MCF 10A (cell line): ENCODE measurements at regions of chr7 and their contacts with region 1.

Region 1: GRCh38 chr7:156473476-156474240 is 166.9 kb upstream of the RNF32 start:
- DNase-seq: peak; percentile 57
- H3K4me3 Mint-ChIP-seq: no peak overlapping the region
- H3K27ac Mint-ChIP-seq: peak overlapping the region; percentile 59
- H3K4me1 Mint-ChIP-seq: peaks cover 20% of the 10 kb centered on the region
- H3K27me3 Mint-ChIP-seq: no peaks in the 10 kb centered on the region
- CTCF ChIP-seq: peak; percentile 58

Region 2: GRCh38 chr7:155815332-155816191 is 658.1 kb before region 1 on chr7:
- CTCF ChIA-PET with region 1: interaction called, 16 read pairs
- POLR2A ChIA-PET with region 1: no interaction called
- intact Hi-C with region 1: no loop called
- DNase-seq: peak; percentile 74
- H3K4me3 Mint-ChIP-seq: no peak overlapping the region
- H3K27ac Mint-ChIP-seq: no peak overlapping the region
- H3K4me1 Mint-ChIP-seq: peaks cover 11% of the 10 kb centered on the region
- H3K27me3 Mint-ChIP-seq: peaks cover 30% of the 10 kb centered on the region
- CTCF ChIP-seq: peak; percentile 91

Region 3: GRCh38 chr7:156156734-156157610 is 316.7 kb before region 1 on chr7:
- CTCF ChIA-PET with region 1: interaction called, 3 read pairs
- POLR2A ChIA-PET with region 1: no interaction called
- intact Hi-C with region 1: loop called (anchors 1 kb)
- DNase-seq: peak; percentile 65
- H3K4me3 Mint-ChIP-seq: no peak overlapping the region
- H3K27ac Mint-ChIP-seq: no peak overlapping the region
- H3K4me1 Mint-ChIP-seq: peaks cover 11% of the 10 kb centered on the region
- H3K27me3 Mint-ChIP-seq: no peaks in the 10 kb centered on the region
- CTCF ChIP-seq: peak; percentile 50

Region 4: GRCh38 chr7:156334636-156335035 is 139.0 kb before region 1 on chr7:
- CTCF ChIA-PET with region 1: interaction called, 3 read pairs
- POLR2A ChIA-PET with region 1: no interaction called
- intact Hi-C with region 1: loop called (anchors 10 kb)
- DNase-seq: peak; percentile 72
- H3K4me3 Mint-ChIP-seq: no peak overlapping the region
- H3K27ac Mint-ChIP-seq: no peak overlapping the region
- H3K4me1 Mint-ChIP-seq: no peaks in the 10 kb centered on the region
- H3K27me3 Mint-ChIP-seq: peaks cover 10% of the 10 kb centered on the region
- CTCF ChIP-seq: no peak

Region 5: GRCh38 chr7:156640257-156640948 is 166.7 kb after region 1 on chr7 and contains the start of gene RNF32:
- CTCF ChIA-PET with region 1: no interaction called
- POLR2A ChIA-PET with region 1: no interaction called
- intact Hi-C with region 1: loop called (anchors 2 kb)
- DNase-seq: peak; percentile 90
- H3K4me3 Mint-ChIP-seq: peak within 1 kb of the TSS; percentile 79
- H3K27ac Mint-ChIP-seq: peak within 1 kb of the TSS; percentile 88
- H3K4me1 Mint-ChIP-seq: peaks cover 6% of the 10 kb centered on the region
- H3K27me3 Mint-ChIP-seq: no peaks in the 10 kb centered on the region
- CTCF ChIP-seq: no peak
- total RNA-seq, gene RNF32: 3.0 and 3.6 TPM in 2 replicates

Region 6: GRCh38 chr7:156764016-156764669 is 290.5 kb after region 1 on chr7:
- CTCF ChIA-PET with region 1: interaction called, 3 read pairs
- POLR2A ChIA-PET with region 1: no interaction called
- intact Hi-C with region 1: loop called (anchors 1 kb)
- DNase-seq: peak; percentile 70
- H3K4me3 Mint-ChIP-seq: no peak overlapping the region
- H3K27ac Mint-ChIP-seq: no peak overlapping the region
- H3K4me1 Mint-ChIP-seq: peaks cover 3% of the 10 kb centered on the region
- H3K27me3 Mint-ChIP-seq: no peaks in the 10 kb centered on the region
- CTCF ChIP-seq: peak; percentile 65

Region 7: DNA sequence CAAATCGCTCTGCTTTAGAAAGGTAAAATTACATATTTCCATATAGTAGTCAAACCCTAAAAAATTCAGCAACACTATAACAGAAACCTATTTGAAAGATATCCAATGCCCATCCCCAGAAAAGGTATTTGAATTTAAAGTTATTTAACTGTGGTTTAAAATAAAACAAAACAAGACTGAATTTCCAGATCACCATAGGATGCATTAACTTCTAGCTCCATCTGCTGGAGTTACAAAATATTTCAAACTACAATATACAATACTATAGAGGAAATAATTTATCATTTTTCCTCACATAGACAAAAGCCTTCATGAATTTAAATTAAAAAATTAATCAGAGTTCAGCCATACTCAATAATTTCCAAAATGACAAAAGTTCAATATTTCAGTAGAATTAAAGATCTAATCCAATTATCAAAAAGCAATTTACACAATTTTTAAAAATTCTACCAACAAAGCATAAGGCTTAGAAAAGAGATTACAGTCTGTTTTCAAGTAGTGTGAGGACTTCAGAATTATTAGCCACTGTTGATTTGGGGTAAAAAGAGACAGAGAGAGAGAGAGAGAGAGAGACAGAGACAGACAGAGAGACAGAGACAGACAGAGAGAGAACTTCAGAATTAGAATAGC is 343.4 kb after region 1 on chr7:
- CTCF ChIA-PET with region 1: no interaction called
- POLR2A ChIA-PET with region 1: no interaction called
- intact Hi-C with region 1: loop called (anchors 5 kb)
- DNase-seq: peak; percentile 25
- H3K4me3 Mint-ChIP-seq: no peak overlapping the region
- H3K27ac Mint-ChIP-seq: no peak overlapping the region
- H3K4me1 Mint-ChIP-seq: peaks cover 3% of the 10 kb centered on the region
- H3K27me3 Mint-ChIP-seq: no peaks in the 10 kb centered on the region
- CTCF ChIP-seq: peak; percentile 48